ENCODE measurements at regions of chr20 and their contacts with region 1.

Region 1: DNA sequence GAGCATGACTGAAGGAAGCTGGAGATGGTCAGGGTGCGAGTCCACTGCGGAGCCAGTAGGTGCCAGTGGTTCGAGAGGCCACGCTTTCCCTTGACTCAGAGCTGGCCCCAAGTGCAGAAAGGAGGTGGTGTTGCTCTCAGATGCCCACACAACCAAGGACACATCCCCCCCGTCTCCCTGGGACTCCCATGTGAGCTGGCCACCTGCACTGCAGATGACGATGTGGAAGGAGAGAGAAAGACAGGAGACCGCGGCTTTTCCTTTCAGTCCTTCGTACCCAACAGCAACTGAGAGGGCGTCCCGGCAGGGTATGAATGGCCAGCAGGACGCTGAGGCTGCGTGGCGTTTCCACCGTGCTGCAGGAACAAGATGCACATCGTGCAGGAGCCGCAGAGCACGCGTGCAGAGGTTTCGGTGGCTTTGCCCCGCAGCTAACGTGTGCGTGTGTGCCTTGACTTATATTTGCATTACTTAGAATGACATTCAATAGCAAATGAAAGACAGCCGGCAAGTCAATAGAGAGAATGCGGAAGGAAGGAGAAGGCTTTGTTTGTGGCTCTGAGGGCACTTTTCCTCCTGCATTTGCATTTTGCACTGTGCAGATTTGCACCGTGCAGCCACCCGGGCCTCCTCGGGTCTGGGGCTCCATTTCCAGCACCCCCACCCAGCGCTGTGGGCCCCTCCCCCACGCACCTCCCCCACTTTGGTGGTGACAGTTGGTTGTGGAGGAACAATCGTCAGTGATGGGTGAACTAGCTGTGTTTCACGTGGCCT is 26.3 kb upstream of the BHLHE23 start:
- DNase-seq: peak; percentile 35
- H3K4me3 Mint-ChIP-seq: peak overlapping the region; percentile 51
- H3K27ac Mint-ChIP-seq: no peak overlapping the region
- H3K4me1 Mint-ChIP-seq: peaks cover 17% of the 10 kb centered on the region
- H3K27me3 Mint-ChIP-seq: peaks cover 100% of the 10 kb centered on the region
- CTCF ChIP-seq: no peak

Region 2: DNA sequence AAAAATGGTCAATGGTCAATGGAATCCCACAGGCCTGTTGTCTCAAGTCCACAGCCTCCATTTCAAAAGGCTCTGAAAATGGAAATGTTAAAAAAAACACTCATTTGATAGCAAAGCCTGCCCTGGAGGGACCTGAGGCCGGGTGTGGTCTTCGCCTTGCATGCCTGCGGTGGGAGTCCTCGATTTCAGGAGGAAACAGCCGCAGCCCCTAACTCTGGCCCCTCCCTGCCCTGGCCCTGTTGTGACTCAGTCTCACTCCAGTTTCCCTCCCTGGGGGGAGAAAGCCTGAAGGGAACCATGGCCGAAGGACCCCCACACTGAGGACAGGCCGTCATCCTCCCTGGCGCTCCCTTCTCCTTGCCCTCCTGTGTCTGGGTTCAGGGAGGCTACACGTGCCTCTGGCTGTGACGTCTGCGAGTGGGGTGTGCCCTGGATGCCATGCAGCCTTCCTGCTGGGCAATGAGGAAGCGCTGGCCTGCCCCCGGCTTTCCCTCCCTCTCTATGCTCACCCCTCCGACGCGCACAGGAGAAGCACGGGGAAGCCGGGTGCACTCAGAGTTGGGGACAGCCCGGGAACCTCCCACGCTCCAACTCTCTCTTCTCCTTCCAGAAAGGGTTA is 35.5 kb before region 1 on chr20:
- CTCF ChIA-PET with region 1: no interaction called
- intact Hi-C with region 1: loop called (anchors 1 kb)
- DNase-seq: peak; percentile 44
- H3K4me3 Mint-ChIP-seq: no peak overlapping the region
- H3K27ac Mint-ChIP-seq: no peak overlapping the region
- H3K4me1 Mint-ChIP-seq: peaks cover 7% of the 10 kb centered on the region
- H3K27me3 Mint-ChIP-seq: peaks cover 99% of the 10 kb centered on the region
- CTCF ChIP-seq: no peak

Region 3: GRCh38 chr20:63101781-63102719 is 69.0 kb after region 1 on chr20:
- CTCF ChIA-PET with region 1: no interaction called
- intact Hi-C with region 1: no loop called
- DNase-seq: no peak
- H3K4me3 Mint-ChIP-seq: peak overlapping the region; percentile 75
- H3K27ac Mint-ChIP-seq: no peak overlapping the region
- H3K4me1 Mint-ChIP-seq: no peaks in the 10 kb centered on the region
- H3K27me3 Mint-ChIP-seq: peaks cover 38% of the 10 kb centered on the region
- CTCF ChIP-seq: no peak

Measured in Calu3 (cell line).